ENCODE measurements at regions of chr3 and their contacts with region 1.

Region 1: GRCh38 chr3:71528816-71529215 is 54.7 kb downstream of the FOXP1 start:
- DNase-seq: no peak
- H3K4me3 ChIP-seq: no peak overlapping the region
- H3K4me3 Mint-ChIP-seq: no peak overlapping the region
- H3K27ac ChIP-seq: no peak overlapping the region
- H3K27ac Mint-ChIP-seq: peak overlapping the region in 2 of 7 donors; percentile 9 to 21
- H3K4me1 ChIP-seq: peaks cover 74 to 76% of the 10 kb centered on the region in 2 donors
- H3K4me1 Mint-ChIP-seq: peaks cover 79% of the 10 kb centered on the region
- H3K27me3 ChIP-seq: no peaks in the 10 kb centered on the region
- H3K27me3 Mint-ChIP-seq: no peaks in the 10 kb centered on the region
- CTCF ChIP-seq: no peak

Region 2: GRCh38 chr3:71542521-71543370 is 13.9 kb after region 1 on chr3:
- intact Hi-C with region 1: loop called in 1 of 2 experiments (anchors 2 kb)
- DNase-seq: peak; percentile 68 to 84 (median 74)
- H3K4me3 ChIP-seq: peak overlapping the region; percentile 27 to 74 (median 44)
- H3K4me3 Mint-ChIP-seq: peak overlapping the region; percentile 80 to 91
- H3K27ac ChIP-seq: peak overlapping the region; percentile 73 to 90
- H3K27ac Mint-ChIP-seq: peak overlapping the region; percentile 91 to 97 (median 96)
- H3K4me1 ChIP-seq: peaks cover 66 to 77% of the 10 kb centered on the region in 2 donors
- H3K4me1 Mint-ChIP-seq: peaks cover 77% of the 10 kb centered on the region
- H3K27me3 ChIP-seq: no peaks in the 10 kb centered on the region
- H3K27me3 Mint-ChIP-seq: no peaks in the 10 kb centered on the region
- CTCF ChIP-seq: no peak

Region 3: DNA sequence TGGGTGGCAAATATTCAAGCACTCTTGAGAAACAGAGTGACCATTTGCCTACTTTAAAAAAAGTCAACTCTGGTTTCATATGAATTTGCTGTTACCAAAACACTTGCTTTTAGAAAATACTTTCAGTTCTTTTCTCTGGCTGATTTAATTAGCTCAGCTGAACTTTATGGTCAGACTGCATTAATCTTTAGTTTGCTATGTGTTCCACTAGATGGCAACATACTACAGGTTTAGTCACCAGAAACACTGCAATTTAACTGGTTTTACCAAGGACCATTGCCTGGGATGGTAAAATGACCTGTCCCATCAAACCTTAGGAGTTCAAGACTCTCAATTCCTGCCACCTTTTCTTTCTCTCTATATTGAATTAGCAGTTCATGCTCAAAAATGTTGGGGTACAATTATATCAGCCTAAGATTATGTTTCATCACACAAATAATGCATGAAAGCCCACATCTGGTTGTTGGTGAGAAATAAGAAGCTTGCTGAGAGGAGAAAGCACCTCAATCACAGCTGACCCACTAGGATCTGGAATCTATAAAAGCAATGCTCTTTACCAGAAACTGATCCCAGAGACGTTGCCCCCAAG is 182.2 kb after region 1 on chr3:
- intact Hi-C with region 1: no loop called
- DNase-seq: peak; percentile 44 to 77 (median 56)
- H3K4me3 ChIP-seq: no peak overlapping the region
- H3K4me3 Mint-ChIP-seq: no peak overlapping the region
- H3K27ac ChIP-seq: no peak overlapping the region
- H3K27ac Mint-ChIP-seq: peak overlapping the region in 3 of 7 donors; percentile 10 to 48 (median 24)
- H3K4me1 ChIP-seq: peaks cover 6 to 32% of the 10 kb centered on the region in 2 donors
- H3K4me1 Mint-ChIP-seq: peaks cover 66% of the 10 kb centered on the region
- H3K27me3 ChIP-seq: no peaks in the 10 kb centered on the region
- H3K27me3 Mint-ChIP-seq: no peaks in the 10 kb centered on the region
- CTCF ChIP-seq: peak; percentile 76

Measured in CD14-positive monocyte (primary cell).